Dorsolateral prefrontal cortex (tissue), 120 donors: ENCODE measurements at regions of chr19 and their contacts with region 1.

Region 1: GRCh38 chr19:45643024-45643926 is 4.1 kb upstream of the EML2 start:
- DNase-seq: peak; percentile 85 to 95 (median 92)
- H3K4me3 ChIP-seq: peak overlapping the region; percentile 46 to 87 (median 74)
- H3K27ac ChIP-seq: peak overlapping the region; percentile 79 to 100 (median 98)
- H3K27me3 ChIP-seq: no peaks in the 10 kb centered on the region
- CTCF ChIP-seq: peak; percentile 89 to 99 (median 97)

Region 2: DNA sequence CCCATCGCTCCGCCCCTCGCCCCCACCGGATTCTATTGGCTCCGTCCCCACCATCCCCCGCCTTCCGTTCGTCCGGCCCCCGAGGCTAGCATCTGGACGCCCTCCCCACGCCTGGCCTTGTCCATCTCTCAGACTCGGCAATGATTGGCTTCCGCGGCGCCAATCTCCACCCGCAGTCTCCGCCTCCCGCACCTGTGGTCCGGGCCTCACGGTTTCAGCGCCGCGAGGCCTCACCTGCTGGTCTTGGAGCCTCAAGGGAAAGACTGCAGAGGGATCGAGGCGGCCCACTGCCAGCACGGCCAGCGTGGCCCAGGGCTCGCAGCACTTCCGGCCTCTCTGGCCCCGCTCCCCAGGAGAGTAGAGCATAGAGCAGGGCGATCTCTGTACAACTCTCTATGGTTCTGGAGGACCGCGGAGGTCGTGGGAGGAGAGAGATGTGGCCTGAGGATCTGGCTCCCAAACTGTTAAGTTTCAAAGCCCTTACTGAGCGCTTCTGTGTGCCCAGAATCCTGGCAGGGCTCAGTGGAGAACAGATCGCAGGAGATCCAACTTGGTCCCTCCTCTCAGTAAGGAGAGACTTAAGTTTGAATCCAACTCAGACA is 219.6 kb before region 1 on chr19 and contains the start of gene ERCC1:
- intact Hi-C with region 1: no loop called
- DNase-seq: peak; percentile 78 to 94 (median 91)
- H3K4me3 ChIP-seq: peak within 1 kb of the TSS; percentile 52 to 93 (median 75)
- H3K27ac ChIP-seq: peak within 1 kb of the TSS; percentile 63 to 98 (median 90)
- H3K27me3 ChIP-seq: no peaks in the 10 kb centered on the region
- CTCF ChIP-seq: peak in 13 of 56 donors; percentile 0 to 30 (median 16)
- total RNA-seq, gene ERCC1: 64.1 to 99.4 (median 79.0) TPM

Region 3: GRCh38 chr19:45506246-45506990 is 136.9 kb before region 1 on chr19:
- intact Hi-C with region 1: loop called in 1 of 2 experiments (anchors 5 kb)
- DNase-seq: peak; percentile 90 to 97 (median 93)
- H3K4me3 ChIP-seq: peak overlapping the region; percentile 65 to 100 (median 96)
- H3K27ac ChIP-seq: peak overlapping the region in 57 of 59 donors; percentile 23 to 93 (median 84)
- H3K27me3 ChIP-seq: no peaks in the 10 kb centered on the region
- CTCF ChIP-seq: peak; percentile 26 to 76 (median 65)

Region 4: GRCh38 chr19:45523642-45524256 is 119.5 kb before region 1 on chr19:
- intact Hi-C with region 1: loop called (anchors 1 to 2 kb)
- DNase-seq: peak; percentile 64 to 88 (median 79)
- H3K4me3 ChIP-seq: no peak overlapping the region
- H3K27ac ChIP-seq: peak overlapping the region in 35 of 59 donors; percentile 3 to 81 (median 44)
- H3K27me3 ChIP-seq: no peaks in the 10 kb centered on the region
- CTCF ChIP-seq: peak; percentile 87 to 96 (median 92)

Region 5: DNA sequence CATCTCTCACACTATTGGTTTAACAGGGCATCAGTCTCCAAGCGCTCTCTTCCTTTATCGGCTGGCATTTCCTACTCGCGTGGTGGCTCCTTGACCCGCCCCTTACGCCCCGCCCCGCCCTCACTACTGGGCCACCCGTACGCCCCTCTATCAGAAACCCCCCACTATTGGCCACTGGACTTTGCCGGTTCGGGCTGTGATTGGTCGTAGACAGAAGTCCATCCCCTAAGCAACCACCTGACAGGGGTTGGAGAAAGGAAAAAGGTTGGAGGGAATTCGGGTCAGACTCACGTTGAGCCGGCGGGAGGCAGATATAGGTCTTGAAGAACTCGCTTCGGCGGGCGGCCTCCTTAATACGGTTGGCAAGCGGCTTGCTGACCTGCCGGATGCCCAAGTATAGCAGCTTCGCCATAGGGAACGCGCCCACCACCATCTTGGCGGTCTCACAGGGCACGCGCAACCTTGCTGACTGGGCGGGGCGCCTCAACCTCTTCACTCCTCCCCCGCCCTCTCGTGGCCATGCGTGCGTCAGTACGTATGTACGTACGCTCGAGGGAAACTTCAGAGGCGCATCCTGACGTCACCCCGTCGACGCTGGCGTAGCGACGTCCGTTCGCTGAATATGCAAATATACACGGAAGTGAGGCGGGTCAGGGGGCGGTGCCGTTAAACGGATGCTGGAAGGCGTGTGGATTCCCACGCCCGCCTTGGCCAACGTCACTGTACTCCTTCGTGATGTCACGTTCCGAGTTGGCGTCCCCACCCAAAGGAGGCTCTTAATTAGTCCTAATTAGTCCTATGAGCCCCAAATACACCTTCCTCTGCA is 58.7 kb before region 1 on chr19 and contains the start of gene OPA3:
- intact Hi-C with region 1: loop called (anchors 10 kb)
- DNase-seq: peak; percentile 100
- H3K4me3 ChIP-seq: peak within 1 kb of the TSS; percentile 56 to 96 (median 83)
- H3K27ac ChIP-seq: peak within 1 kb of the TSS; percentile 92 to 100 (median 98)
- H3K27me3 ChIP-seq: no peaks in the 10 kb centered on the region
- CTCF ChIP-seq: peak in 25 of 56 donors; percentile 4 to 57 (median 22)
- total RNA-seq, gene OPA3: 7.1 to 16.8 (median 11.5) TPM

Region 6: DNA sequence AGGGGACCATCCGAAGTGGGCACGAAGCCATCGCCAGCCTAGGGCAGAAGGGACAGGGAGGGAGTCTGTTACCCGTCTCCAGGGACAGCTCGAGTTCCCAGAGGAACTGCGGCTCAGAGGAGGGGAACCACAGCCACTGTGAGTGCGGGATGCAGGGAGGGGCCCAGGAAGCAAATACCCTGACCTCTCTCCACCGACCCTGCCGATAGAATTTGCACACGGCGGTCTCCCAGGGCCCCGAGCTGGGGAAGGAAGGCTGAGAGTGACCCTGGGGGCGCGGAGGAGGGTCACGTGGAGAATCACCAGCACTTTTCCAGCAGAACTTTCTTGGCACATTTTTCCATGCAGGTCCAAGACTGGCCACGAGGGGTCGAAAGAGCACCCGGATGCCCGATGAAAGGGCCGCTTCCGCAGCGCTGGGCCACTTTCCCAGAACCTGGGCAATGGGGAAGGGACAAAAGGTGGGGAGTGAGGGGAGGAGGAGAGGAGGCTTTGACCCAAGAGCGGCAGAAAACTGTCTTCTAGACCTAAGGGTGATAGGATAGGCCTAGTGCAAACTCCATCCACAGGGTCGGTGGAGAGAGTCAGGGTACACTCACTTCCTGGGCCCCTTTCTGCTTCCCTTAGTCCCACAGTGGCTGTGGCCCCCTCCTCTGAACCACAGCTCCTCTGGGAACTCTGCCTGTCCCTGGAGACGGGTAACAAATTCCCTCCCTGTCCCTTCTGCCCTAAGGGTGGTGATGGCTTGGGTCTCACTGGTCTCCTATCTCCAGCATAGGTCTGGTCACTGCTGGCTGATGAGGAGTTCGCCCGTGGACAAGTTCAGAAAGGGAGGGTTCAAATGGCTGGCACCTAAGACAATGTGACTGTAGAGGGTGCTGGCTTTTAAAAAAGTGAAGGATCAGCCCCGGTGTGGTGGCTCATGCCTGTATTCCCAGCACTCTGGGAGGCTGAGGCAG is 35.9 kb before region 1 on chr19:
- intact Hi-C with region 1: loop called (anchors 1 to 2 kb)
- DNase-seq: peak; percentile 30 to 72 (median 60)
- H3K4me3 ChIP-seq: peak overlapping the region in 37 of 59 donors; percentile 1 to 51 (median 31)
- H3K27ac ChIP-seq: peak overlapping the region in 53 of 59 donors; percentile 4 to 87 (median 69)
- H3K27me3 ChIP-seq: peaks cover 0 to 14% (median 3%) of the 10 kb centered on the region in 45 donors
- CTCF ChIP-seq: peak; percentile 62 to 90 (median 84)

Region 7: GRCh38 chr19:45681391-45682015 is 38.2 kb after region 1 on chr19:
- intact Hi-C with region 1: loop called (anchors 1 to 2 kb)
- DNase-seq: peak; percentile 82 to 93 (median 88)
- H3K4me3 ChIP-seq: peak overlapping the region; percentile 23 to 70 (median 52)
- H3K27ac ChIP-seq: peak overlapping the region; percentile 75 to 100 (median 97)
- H3K27me3 ChIP-seq: peaks cover 0 to 38% (median 21%) of the 10 kb centered on the region in 45 donors
- CTCF ChIP-seq: peak; percentile 75 to 99 (median 96)

Region 8: GRCh38 chr19:45692187-45693105 is 49.2 kb after region 1 on chr19 and contains the start of gene QPCTL:
- intact Hi-C with region 1: loop called in 1 of 2 experiments (anchors 5 kb)
- DNase-seq: peak; percentile 90 to 99 (median 98)
- H3K4me3 ChIP-seq: peak within 1 kb of the TSS; percentile 68 to 100 (median 90)
- H3K27ac ChIP-seq: peak within 1 kb of the TSS; percentile 25 to 96 (median 84)
- H3K27me3 ChIP-seq: no peaks in the 10 kb centered on the region
- CTCF ChIP-seq: peak in 13 of 56 donors; percentile 0 to 58 (median 23)
- total RNA-seq, gene QPCTL: 3.0 to 16.5 (median 8.6) TPM